ENCODE measurements at regions of chr10 and their contacts with region 1.

Region 1: GRCh38 chr10:131885391-131886161 is 15.2 kb upstream of the PPP2R2D start:
- DNase-seq: peak; percentile 48 to 86
- ATAC-seq: peak; percentile 99

Region 2: GRCh38 chr10:131663351-131663750 is 222.2 kb before region 1 on chr10:
- intact Hi-C with region 1: no loop called
- DNase-seq: no peak
- ATAC-seq: no peak

Region 3: DNA sequence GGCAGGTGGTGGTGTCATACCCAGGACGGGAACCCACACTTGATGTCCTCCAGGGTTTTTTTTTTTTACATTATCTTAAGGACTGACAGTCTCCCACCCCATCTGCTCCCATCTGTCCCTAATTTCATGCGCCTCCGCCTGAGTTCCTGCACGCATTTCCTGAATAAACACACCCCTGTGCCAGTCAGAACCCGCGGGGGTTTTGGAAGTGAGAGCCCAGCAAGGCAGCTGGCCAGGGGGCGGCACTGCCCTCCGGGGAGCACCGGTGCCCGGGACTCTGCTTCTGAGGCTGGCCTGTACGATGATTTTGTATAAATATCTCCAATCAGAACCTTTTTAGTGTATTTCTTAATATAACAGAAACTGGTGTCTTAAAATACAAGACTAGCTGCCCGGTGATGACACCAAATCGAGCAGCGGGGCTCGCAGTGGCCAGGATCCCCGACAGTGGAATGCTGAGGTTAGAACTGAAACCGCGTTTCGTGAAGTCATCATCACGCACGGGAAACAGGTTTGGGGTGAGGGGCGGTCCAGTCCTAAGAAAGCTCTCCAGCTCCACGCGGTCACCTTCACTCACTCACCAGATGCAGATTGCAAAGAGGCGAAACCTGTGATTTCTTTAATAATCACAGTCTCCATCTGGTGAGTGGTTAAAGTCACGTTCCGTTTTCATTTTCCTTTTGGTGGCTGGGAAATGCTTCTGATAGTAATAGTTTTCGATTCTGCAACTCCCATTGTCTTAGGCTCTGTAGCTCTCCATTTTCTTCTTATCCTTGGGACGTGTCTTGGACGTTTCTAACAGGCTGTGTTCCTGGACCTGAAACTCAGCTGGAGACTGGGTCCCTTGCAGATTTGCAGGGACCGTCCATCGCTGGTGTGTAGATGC is 76.4 kb after region 1 on chr10:
- intact Hi-C with region 1: no loop called
- DNase-seq: no peak
- ATAC-seq: peak; percentile 8

Region 4: GRCh38 chr10:132023092-132023811 is 137.7 kb after region 1 on chr10:
- intact Hi-C with region 1: loop called (anchors 5 to 10 kb)
- DNase-seq: peak; percentile 54 to 89
- ATAC-seq: peak; percentile 95

Region 5: DNA sequence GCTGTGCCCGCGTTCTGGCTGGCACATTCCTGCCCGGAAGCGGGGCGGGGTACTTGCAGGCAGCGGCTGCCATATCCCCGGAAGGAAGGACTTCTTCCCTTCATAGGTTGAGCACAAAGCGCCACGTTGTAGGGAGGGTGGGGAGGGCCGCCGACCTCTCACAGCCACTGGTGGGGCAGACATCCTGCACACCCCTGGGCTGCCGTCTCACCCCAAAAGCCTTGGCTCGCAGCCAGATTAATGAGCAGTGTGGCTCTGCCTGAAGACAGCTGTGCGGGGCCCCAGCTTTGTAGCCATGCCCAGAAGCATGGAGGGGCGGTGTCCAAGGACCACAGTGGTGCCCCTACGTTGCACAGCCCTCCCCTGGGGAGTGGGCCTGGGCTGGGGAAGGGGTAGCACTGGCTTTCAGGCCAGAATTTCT is 246.9 kb after region 1 on chr10:
- intact Hi-C with region 1: no loop called
- DNase-seq: no peak
- ATAC-seq: no peak

Region 6: DNA sequence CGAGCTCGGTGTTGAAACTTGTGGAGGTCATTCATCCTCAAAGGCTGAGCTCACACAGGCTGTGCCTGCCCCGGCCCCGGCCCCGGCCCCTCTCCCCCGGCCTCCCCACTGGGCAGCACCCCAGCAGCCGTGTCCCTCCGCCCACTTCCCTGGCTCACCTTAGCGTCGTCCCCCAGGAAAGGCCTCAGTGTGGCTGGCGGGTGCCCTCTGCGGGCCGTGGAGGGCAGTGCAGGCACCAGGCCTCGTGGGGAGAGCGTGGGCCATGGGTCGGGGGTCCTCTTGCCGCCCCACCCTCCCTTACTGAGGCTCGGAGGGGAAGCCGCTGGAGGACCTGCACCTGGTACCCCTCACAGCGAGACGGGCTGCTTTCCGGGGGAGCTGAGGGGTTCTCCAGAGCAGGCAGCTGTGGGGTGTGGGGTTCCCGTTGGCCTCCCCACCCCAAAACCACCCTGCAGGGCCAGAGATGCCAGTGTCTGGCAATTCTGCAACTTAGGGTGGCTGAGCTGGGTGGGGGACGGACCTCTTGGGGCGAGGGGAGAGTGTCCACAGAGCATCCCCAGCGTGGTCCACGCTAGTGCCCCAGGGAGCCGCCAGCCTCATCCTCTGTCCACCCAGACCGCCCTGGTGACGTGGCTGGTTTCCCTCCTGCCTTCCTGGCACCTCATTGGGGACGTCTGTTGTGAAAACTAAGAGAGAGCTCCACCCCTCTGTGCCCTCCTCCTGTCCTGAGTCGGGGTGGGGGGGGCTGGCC is 257.0 kb after region 1 on chr10:
- intact Hi-C with region 1: loop called in 1 of 2 experiments (anchors 10 kb)
- DNase-seq: peak in 1 of 2 donors; percentile 37
- ATAC-seq: peak; percentile 63

Measured in left colon (tissue), 2 donors.